Kidney (tissue), 22 donors: ENCODE measurements at regions of chr10 and their contacts with region 1.

Region 1: GRCh38 chr10:73879296-73880173 is 5.2 kb upstream of the CAMK2G start:
- DNase-seq: peak; percentile 79 to 95 (median 83)
- H3K4me3 ChIP-seq: no peak overlapping the region
- H3K27ac ChIP-seq: no peak overlapping the region
- H3K4me1 ChIP-seq: no peaks in the 10 kb centered on the region
- H3K27me3 ChIP-seq: no peaks in the 10 kb centered on the region
- CTCF ChIP-seq: peak; percentile 90

Region 2: GRCh38 chr10:72812753-72813430 is 1066.6 kb before region 1 on chr10:
- intact Hi-C with region 1: no loop called
- DNase-seq: no peak
- H3K4me3 ChIP-seq: no peak overlapping the region
- H3K27ac ChIP-seq: no peak overlapping the region
- H3K4me1 ChIP-seq: peaks cover 0 to 2% (median 0%) of the 10 kb centered on the region in 3 donors
- H3K27me3 ChIP-seq: no peaks in the 10 kb centered on the region
- CTCF ChIP-seq: no peak

Region 3: GRCh38 chr10:73940634-73941221 is 61.2 kb after region 1 on chr10:
- intact Hi-C with region 1: loop called (anchors 10 kb)
- DNase-seq: peak; percentile 85 to 94 (median 89)
- H3K4me3 ChIP-seq: peak overlapping the region in 2 of 3 donors; percentile 14 to 44
- H3K27ac ChIP-seq: peak overlapping the region in 1 of 2 donors; percentile 17
- H3K4me1 ChIP-seq: peaks cover 0 to 8% (median 5%) of the 10 kb centered on the region in 3 donors
- H3K27me3 ChIP-seq: no peaks in the 10 kb centered on the region
- CTCF ChIP-seq: peak; percentile 90